ENCODE measurements at regions of chr4 and their contacts with region 1.

Region 1: GRCh38 chr4:186249785-186250754 is 15.9 kb upstream of the F11 start:
- DNase-seq: no peak
- ATAC-seq: no peak

Region 2: GRCh38 chr4:186201535-186202230 is 48.4 kb before region 1 on chr4:
- intact Hi-C with region 1: loop called (anchors 2 kb)
- DNase-seq: no peak
- ATAC-seq: peak; percentile 60

Measured in sciatic nerve (tissue), 2 donors.